B cell (primary cell): ENCODE measurements at regions of chr3 and their contacts with region 1.

Region 1: DNA sequence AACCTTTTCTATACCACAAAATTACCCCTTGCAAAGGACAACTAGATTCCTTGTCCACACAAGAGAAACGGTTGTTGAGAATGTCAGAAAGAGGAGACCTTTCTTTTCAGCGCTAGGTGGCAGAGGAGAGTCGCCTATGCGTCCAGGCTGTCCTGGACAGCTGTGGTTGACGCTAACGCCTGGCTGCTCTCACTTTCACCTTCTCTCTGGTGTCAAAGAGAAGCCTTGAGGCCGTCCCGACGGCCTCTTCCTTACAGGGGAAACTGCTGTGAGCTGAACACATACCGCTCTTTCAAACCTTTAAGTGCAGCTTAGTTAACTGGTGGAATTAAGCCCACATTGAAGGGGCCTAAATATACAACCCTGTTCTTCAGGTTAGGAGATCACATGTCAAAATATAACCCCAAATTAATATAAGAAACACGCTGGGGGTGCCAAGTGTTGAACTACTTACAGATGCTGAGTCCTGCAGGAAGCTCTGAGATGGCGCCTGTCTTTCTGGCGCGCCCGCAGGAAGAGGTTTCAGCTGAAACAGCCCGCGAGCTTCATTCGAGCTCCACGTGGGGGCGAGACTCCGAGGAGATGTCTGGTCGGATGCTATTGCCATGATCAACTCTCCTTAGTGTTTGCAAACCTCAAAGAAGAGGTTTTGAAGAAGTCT is 26.1 kb upstream of the KBTBD8 start:
- DNase-seq: peak; percentile 84
- ATAC-seq: peak; percentile 97
- H3K4me3 ChIP-seq: peak overlapping the region; percentile 28 to 69 (median 55)
- H3K4me3 Mint-ChIP-seq: peak overlapping the region; percentile 86
- H3K27ac ChIP-seq: peak overlapping the region; percentile 31 to 46
- H3K27ac Mint-ChIP-seq: peak overlapping the region; percentile 87
- H3K4me1 ChIP-seq: peaks cover 11 to 13% of the 10 kb centered on the region in 2 donors
- H3K4me1 Mint-ChIP-seq: peaks cover 15% of the 10 kb centered on the region
- H3K27me3 ChIP-seq: no peaks in the 10 kb centered on the region
- H3K27me3 Mint-ChIP-seq: no peaks in the 10 kb centered on the region
- CTCF ChIP-seq: peak; percentile 87

Region 2: DNA sequence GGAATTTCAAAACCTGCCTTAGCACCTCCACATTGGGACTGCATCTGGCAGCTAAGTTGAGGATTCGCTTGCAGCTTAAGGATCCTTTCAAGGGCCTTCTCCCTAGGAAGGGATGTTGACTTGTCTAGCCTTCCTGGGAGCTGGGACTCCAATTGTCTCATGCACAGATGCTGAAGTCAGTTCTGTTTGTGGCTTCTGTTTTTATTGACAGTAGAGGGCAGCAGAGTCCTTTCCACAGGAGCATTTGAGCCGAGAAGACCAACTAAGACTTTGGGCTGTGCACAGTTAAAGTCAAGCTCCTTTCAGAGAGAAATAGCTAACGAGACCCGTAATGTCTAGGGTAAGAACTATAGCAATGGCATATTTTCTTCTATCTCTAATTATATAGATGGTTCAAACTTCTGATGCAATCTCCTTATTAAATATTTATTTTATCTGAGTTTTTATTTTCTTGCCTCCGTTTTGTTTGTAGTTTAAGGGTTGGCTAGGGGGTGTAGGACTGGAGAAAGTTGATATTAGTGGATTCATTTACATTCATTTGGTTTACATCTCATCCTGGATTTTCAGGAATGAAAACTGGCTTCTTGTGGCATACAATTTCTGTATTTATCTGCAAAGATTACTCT is 33.6 kb before region 1 on chr3:
- CTCF ChIA-PET with region 1: interaction called, 32 read pairs
- POLR2A ChIA-PET with region 1: no interaction called
- intact Hi-C with region 1: no loop called
- DNase-seq: peak; percentile 63
- ATAC-seq: peak; percentile 51
- H3K4me3 ChIP-seq: no peak overlapping the region
- H3K4me3 Mint-ChIP-seq: no peak overlapping the region
- H3K27ac ChIP-seq: no peak overlapping the region
- H3K27ac Mint-ChIP-seq: no peak overlapping the region
- H3K4me1 ChIP-seq: no peaks in the 10 kb centered on the region
- H3K4me1 Mint-ChIP-seq: no peaks in the 10 kb centered on the region
- H3K27me3 ChIP-seq: peaks cover 0 to 9% (median 5%) of the 10 kb centered on the region in 4 experiments
- H3K27me3 Mint-ChIP-seq: peaks cover 28% of the 10 kb centered on the region
- CTCF ChIP-seq: peak; percentile 87

Region 3: DNA sequence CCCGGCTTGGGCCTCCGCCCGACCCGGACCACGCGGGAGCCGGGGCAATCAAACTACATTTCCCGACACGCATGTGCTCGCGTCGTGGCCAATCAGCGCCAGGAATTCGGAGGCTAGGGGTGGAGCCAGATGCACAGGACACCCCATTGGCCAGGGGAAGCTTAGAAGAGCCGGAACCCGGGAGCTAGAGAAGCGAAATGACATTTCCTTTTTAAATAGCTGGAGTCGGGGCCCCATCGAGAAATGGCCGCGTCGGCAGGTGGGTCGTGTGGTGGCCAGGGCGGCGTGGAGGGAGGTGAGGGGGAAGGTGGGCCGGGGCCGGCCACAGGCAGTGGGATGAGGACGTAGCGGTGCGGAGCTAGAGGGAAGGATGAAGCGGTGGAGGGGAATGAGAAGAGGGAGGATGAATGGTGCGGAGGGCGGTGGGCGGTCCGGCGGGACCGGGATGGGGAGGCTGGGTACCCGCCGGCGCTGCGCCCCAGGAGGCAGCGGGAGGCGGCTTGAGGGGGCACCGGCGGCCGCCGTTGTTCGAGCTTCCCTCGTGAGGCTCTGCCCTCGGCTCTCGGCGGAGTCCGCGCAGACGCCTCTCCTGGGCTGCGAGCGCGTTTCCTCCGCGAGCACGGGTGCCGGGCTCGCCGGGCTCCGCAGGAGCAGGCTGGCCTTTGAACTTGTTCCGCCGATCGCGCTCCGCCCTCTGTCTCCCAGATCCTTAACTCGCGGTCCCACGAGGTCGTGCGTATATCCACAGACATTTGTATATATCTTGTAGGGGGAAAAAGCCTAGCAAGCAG is 26.3 kb after region 1 on chr3 and contains the start of gene KBTBD8:
- CTCF ChIA-PET with region 1: interaction called, 38 read pairs
- POLR2A ChIA-PET with region 1: interaction called, 12 read pairs
- intact Hi-C with region 1: loop called (anchors 1 kb)
- DNase-seq: peak; percentile 99
- ATAC-seq: peak; percentile 86
- H3K4me3 ChIP-seq: peak within 1 kb of the TSS; percentile 68 to 90 (median 82)
- H3K4me3 Mint-ChIP-seq: peak within 1 kb of the TSS; percentile 96
- H3K27ac ChIP-seq: peak within 1 kb of the TSS; percentile 79 to 91
- H3K27ac Mint-ChIP-seq: peak within 1 kb of the TSS; percentile 98
- H3K4me1 ChIP-seq: peaks cover 36 to 41% of the 10 kb centered on the region in 2 donors
- H3K4me1 Mint-ChIP-seq: peaks cover 44% of the 10 kb centered on the region
- H3K27me3 ChIP-seq: no peaks in the 10 kb centered on the region
- H3K27me3 Mint-ChIP-seq: peaks cover 4% of the 10 kb centered on the region
- CTCF ChIP-seq: no peak
- total RNA-seq, gene KBTBD8: 27.6 and 32.6 TPM in 2 replicates

Region 4: GRCh38 chr3:67037615-67038014 is 65.6 kb after region 1 on chr3:
- CTCF ChIA-PET with region 1: interaction called, 153 read pairs
- POLR2A ChIA-PET with region 1: no interaction called
- intact Hi-C with region 1: loop called (anchors 1 kb)
- DNase-seq: peak; percentile 42
- ATAC-seq: no peak
- H3K4me3 ChIP-seq: no peak overlapping the region
- H3K4me3 Mint-ChIP-seq: no peak overlapping the region
- H3K27ac ChIP-seq: no peak overlapping the region
- H3K27ac Mint-ChIP-seq: no peak overlapping the region
- H3K4me1 ChIP-seq: peaks cover 4 to 6% of the 10 kb centered on the region in 2 donors
- H3K4me1 Mint-ChIP-seq: peaks cover 6% of the 10 kb centered on the region
- H3K27me3 ChIP-seq: no peaks in the 10 kb centered on the region
- H3K27me3 Mint-ChIP-seq: no peaks in the 10 kb centered on the region
- CTCF ChIP-seq: no peak

Region 5: DNA sequence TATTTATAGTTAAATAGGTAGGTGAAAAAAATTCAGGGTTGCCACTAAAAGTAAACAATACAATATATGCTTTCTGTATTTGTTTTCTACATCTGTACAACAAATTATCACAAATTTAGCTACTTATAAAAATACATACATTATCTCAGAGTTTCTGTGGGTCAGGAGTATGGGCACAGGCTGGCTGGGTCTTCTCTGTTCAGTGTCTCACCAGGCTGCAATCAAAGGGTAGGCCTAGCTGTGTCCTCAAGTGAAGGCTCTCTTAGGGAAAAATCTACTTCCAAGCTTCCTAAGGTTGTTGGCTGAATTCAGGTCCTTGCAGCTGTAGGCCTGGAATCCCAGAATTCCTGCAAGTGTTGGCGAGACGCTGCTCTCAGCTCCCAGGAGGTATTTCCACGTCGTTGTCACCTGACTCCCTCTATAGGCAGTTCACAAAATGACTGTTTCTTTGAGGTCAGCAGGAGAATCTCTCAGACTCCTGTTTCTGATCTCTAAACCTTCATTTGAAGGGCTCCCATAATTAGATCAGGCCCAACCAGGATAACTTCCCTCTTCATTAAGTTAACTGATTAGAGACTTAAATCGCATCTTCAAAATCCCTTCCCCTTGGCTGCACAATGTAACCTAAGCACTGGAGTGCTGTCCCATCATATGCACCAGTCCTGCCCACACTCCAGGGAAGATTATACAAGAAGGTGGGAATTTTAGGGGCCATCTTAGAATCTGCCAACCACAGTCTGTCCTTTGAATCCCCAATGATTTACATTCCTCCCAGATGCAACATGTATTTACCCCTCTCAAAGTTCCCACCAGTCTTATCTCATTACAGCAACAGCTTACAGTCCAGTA is 385.8 kb after region 1 on chr3:
- CTCF ChIA-PET with region 1: interaction called, 4 read pairs
- POLR2A ChIA-PET with region 1: no interaction called
- intact Hi-C with region 1: loop called (anchors 10 kb)
- DNase-seq: no peak
- ATAC-seq: no peak
- H3K4me3 ChIP-seq: no peak overlapping the region
- H3K4me3 Mint-ChIP-seq: no peak overlapping the region
- H3K27ac ChIP-seq: no peak overlapping the region
- H3K27ac Mint-ChIP-seq: no peak overlapping the region
- H3K4me1 ChIP-seq: no peaks in the 10 kb centered on the region
- H3K4me1 Mint-ChIP-seq: no peaks in the 10 kb centered on the region
- H3K27me3 ChIP-seq: no peaks in the 10 kb centered on the region
- H3K27me3 Mint-ChIP-seq: no peaks in the 10 kb centered on the region
- CTCF ChIP-seq: peak; percentile 33

Region 6: DNA sequence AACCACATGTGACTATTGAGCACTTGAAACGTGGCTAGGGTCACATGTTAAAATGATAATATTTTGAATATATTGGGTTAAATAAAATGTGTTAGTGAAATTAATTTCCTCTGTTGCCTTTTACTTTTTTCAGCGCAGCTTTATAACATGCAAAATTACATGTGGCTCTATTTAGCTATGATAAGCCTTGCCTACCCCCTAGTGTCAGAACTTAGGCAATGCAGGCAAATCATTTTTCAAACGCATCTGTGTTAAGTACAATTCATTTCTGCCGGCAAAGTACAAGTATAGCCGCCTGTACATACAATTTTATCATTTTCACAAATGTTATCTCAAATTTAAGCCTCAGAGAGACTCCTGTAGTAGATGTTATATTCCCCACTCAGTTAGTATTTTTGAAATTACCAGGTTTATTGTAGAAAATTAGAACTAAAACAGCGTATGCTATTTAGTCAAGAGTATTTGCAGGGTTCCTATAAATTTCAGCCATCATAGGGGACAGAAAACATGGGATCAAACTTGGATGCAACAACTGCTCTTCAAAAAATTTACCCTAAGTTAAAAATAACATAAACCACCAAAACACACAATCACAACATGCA is 1904.2 kb after region 1 on chr3:
- CTCF ChIA-PET with region 1: interaction called, 15 read pairs
- POLR2A ChIA-PET with region 1: no interaction called
- intact Hi-C with region 1: loop called (anchors 2 kb)
- DNase-seq: peak; percentile 65
- ATAC-seq: peak; percentile 51
- H3K4me3 ChIP-seq: no peak overlapping the region
- H3K4me3 Mint-ChIP-seq: no peak overlapping the region
- H3K27ac ChIP-seq: no peak overlapping the region
- H3K27ac Mint-ChIP-seq: no peak overlapping the region
- H3K4me1 ChIP-seq: no peaks in the 10 kb centered on the region
- H3K4me1 Mint-ChIP-seq: no peaks in the 10 kb centered on the region
- H3K27me3 ChIP-seq: no peaks in the 10 kb centered on the region
- H3K27me3 Mint-ChIP-seq: peaks cover 35% of the 10 kb centered on the region
- CTCF ChIP-seq: peak; percentile 98